ENCODE measurements at regions of chr15 and their contacts with region 1.

Region 1: DNA sequence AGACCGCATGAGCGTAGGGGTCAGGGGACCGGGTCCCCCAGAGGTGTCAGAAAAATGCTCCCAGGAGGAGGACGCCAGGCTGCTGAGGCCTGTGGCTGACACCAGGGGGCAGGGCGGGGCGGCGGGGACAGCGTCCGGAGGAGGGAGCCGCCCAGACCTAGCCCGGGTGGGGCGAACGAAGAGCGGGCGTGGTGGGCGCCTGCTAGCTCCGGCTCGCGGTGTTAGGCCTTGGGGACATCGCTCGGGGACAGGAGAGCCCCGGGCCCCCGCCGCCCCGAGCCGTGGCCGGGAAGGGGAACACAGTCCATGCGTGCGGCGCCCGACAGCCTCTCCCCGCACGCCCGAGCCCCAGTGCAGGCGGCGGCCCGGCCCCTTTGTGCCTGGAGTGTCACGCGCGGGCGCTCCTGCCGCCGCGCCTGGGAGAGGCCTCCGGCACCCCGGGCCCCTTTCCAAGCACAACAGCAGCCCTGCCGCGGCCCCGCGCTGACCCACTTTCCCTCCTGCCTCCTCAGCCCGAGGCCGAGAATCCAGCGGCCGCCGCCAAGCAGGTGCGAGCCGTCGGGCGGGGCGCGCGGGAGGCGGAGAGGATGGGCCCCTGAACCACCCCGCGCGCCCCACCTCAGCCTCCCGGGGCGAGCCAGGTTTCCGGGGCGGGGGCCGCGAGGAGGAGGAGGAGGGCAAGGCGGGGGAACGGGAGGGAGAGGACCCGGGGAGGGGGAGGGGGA is 111.0 kb upstream of the KLF13 start:
- DNase-seq: peak; percentile 34
- H3K4me3 ChIP-seq: peak overlapping the region; percentile 30 to 45 (median 33)
- H3K27ac ChIP-seq: no peak overlapping the region
- H3K4me1 ChIP-seq: no peaks in the 10 kb centered on the region
- H3K27me3 ChIP-seq: peaks cover 7 to 8% of the 10 kb centered on the region in 2 experiments
- CTCF ChIP-seq: peak; percentile 73 to 90
- POLR2A ChIP-seq: no peak

Region 2: GRCh38 chr15:31145271-31145911 is 70.3 kb before region 1 on chr15:
- CTCF ChIA-PET with region 1: no interaction called
- POLR2A ChIA-PET with region 1: no interaction called
- dilution Hi-C with region 1: no loop called
- intact Hi-C with region 1: no loop called
- DNase-seq: no peak
- H3K4me3 ChIP-seq: no peak overlapping the region
- H3K27ac ChIP-seq: no peak overlapping the region
- H3K4me1 ChIP-seq: no peaks in the 10 kb centered on the region
- H3K27me3 ChIP-seq: peaks cover 0 to 2% of the 10 kb centered on the region in 2 experiments
- CTCF ChIP-seq: no peak
- POLR2A ChIP-seq: no peak

Region 3: DNA sequence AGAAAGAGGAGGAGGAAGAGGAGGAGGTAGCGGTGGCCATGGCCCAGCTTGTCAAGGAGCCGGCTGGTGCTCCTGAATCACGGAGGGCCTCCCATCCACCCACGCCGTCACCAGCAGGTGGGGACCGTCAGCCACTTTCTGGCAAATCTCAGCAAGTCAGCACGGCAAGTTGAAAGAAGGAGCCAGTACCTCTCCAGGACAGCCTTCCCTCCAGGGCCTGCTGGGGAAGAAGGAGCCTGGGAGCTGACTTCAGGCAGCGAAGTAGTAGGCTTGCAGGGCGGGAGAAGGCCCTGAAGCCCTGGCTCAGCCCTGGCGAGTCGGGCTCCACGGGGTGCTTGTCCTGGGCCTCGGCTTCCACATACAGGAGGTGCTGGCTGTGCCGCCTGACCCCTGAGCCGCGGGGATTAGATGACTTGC is 14.9 kb before region 1 on chr15:
- CTCF ChIA-PET with region 1: interaction called, 28 read pairs
- POLR2A ChIA-PET with region 1: no interaction called
- dilution Hi-C with region 1: no loop called
- intact Hi-C with region 1: loop called (anchors 2 kb)
- DNase-seq: peak; percentile 24
- H3K4me3 ChIP-seq: no peak overlapping the region
- H3K27ac ChIP-seq: no peak overlapping the region
- H3K4me1 ChIP-seq: no peaks in the 10 kb centered on the region
- H3K27me3 ChIP-seq: no peaks in the 10 kb centered on the region
- CTCF ChIP-seq: peak; percentile 22 to 24
- POLR2A ChIP-seq: no peak

Region 4: DNA sequence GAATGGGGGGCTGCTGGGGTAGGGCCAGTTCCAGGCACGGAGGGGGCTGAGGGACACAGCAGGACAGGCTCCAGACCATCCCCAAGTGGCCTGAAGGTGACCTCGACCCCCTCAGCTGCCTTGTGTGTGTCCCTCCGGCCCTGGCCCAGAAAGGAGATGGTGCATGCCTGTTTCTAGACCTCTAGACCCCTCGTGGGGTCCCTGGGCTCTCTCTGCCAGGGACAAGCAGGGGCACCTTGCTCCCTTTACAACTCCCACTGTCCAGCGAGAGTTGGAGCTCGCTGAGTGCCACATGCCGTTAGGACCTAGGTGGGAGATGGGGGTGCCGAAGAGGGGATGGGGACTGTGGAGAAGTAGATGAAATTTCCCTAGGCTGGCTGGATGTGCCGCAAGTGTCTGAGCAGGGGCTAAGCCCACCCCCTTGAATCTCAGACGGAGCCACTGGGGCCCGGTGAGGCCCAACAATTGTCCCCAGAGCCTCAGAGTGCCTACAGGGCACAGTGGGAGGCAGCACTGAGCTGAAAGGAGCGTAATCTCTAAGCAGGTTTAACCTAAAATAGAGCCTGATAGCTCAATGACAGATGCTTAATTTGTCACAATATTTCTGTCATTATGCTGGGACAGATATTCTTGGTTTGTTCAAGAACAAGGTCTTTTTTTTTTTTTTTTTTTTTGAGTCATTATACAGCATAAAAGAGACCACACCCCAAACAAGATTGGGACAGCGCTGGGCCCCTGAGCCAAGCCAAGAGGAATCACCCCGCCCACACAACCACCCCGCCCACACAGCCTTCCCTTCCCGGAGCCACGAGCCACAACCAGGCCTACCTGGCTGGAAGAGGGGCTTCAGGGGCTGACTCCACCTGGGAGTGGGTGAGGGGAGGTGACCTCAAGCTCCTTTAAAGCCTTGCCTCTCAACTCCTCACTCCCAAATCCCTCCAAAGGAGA is 87.4 kb after region 1 on chr15:
- CTCF ChIA-PET with region 1: no interaction called
- POLR2A ChIA-PET with region 1: no interaction called
- dilution Hi-C with region 1: loop called (anchors 25 kb)
- intact Hi-C with region 1: no loop called
- DNase-seq: no peak
- H3K4me3 ChIP-seq: no peak overlapping the region
- H3K27ac ChIP-seq: no peak overlapping the region
- H3K4me1 ChIP-seq: no peaks in the 10 kb centered on the region
- H3K27me3 ChIP-seq: no peaks in the 10 kb centered on the region
- CTCF ChIP-seq: no peak
- POLR2A ChIP-seq: no peak